Activated CD4-positive, alpha-beta T cell treated with anti-CD3 and anti-CD28 coated beads for 36 hours (primary cell): ENCODE measurements at regions of chr6 and their contacts with region 1.

Region 1: GRCh38 chr6:90274451-90275030 is 22.1 kb downstream of the BACH2 start:
- DNase-seq: peak; percentile 96
- ATAC-seq: peak; percentile 89
- H3K4me3 Mint-ChIP-seq: peak overlapping the region; percentile 54
- H3K27ac Mint-ChIP-seq: peak overlapping the region; percentile 90
- H3K4me1 Mint-ChIP-seq: peaks cover 95% of the 10 kb centered on the region
- H3K27me3 Mint-ChIP-seq: no peaks in the 10 kb centered on the region

Region 2: DNA sequence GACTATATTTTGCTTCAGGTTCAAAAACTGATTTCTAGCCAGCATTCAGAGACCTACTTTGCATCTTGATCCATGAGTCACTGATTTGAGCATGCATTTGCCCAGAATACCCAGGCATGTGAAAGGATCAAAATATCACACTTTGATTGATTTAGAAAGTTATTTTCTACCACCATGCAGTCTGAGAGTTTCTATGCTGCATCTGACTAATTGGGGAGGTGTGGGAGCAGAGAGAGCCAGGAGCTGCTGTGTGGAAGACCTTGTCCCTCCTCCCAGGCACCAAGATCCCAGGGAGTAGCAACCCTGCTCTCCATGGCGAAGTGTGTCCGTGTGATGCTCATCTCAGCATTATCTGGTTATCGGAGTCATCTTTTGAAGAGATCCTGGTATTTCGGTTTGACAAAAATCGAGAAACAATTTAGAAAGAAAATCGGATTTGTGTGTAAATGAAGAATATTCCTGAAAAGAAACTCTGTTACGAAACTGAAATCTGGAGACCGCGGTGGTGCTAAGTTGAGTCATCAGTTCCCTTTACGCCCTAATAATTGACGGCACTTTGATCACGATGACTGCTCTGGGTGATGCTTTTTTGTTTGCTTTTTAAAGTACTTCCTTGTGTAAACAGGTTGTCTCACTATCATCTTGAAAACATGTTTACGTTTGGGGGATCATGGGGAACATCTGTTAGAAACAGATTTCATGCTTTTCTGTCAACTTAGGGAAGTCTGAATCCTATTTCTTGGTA is 171.3 kb before region 1 on chr6:
- CTCF ChIA-PET with region 1: no interaction called
- POLR2A ChIA-PET with region 1: no interaction called
- intact Hi-C with region 1: loop called in 1 of 2 experiments (anchors 1 kb)
- DNase-seq: peak; percentile 58
- ATAC-seq: peak; percentile 80
- H3K4me3 Mint-ChIP-seq: peak overlapping the region; percentile 43
- H3K27ac Mint-ChIP-seq: peak overlapping the region; percentile 79
- H3K4me1 Mint-ChIP-seq: peaks cover 93% of the 10 kb centered on the region
- H3K27me3 Mint-ChIP-seq: no peaks in the 10 kb centered on the region

Region 3: GRCh38 chr6:90251295-90251992 is 23.1 kb before region 1 on chr6:
- CTCF ChIA-PET with region 1: interaction called, 11 read pairs
- POLR2A ChIA-PET with region 1: interaction called, 11 read pairs
- intact Hi-C with region 1: loop called (anchors 1 kb)
- DNase-seq: no peak
- ATAC-seq: peak; percentile 72
- H3K4me3 Mint-ChIP-seq: peak overlapping the region; percentile 26
- H3K27ac Mint-ChIP-seq: peak overlapping the region; percentile 97
- H3K4me1 Mint-ChIP-seq: peaks cover 89% of the 10 kb centered on the region
- H3K27me3 Mint-ChIP-seq: no peaks in the 10 kb centered on the region

Region 4: DNA sequence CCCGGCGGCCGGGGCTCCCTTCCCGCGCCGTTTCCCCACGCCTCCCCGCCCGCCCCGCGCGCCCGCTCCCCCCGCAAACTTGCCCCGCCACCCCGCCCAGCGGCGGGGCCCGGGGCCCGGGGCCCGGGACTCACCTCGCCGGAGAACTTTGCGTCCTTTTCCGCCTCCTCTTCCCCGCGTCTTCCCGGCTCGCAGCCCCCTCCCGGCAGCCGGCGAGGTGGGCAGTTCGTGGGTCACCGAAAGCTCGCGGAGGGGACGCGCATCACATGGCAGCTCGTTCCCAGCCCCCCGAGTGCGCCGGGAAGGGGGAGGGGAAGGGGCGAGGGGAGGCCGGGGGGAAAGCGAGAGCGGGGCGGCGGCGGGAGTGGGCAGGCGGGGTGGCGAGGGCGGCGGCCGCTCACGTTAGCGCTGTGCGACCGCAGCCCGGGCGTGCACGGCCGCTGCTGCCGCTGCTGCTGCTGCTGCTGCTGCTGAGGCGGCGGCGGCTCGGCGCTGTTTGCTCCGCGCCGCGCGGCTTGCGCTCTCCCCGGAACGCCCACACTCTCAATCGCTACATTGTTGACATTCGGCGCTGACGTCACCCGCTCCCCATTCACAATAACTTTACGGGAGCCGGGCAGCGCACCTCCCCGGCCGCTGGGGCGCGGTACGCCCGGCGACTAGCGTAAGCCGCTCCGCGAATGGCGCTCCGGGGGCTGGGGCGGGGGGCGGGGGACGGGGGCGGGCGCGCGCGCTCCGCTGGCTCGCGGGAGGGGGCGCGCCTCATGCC is 22.0 kb after region 1 on chr6 and contains the start of gene BACH2:
- CTCF ChIA-PET with region 1: interaction called, 3 read pairs
- POLR2A ChIA-PET with region 1: interaction called, 6 read pairs
- intact Hi-C with region 1: loop called (anchors 1 kb)
- DNase-seq: peak; percentile 99
- ATAC-seq: peak; percentile 66
- H3K4me3 Mint-ChIP-seq: peak within 1 kb of the TSS; percentile 86
- H3K27ac Mint-ChIP-seq: peak within 1 kb of the TSS; percentile 100
- H3K4me1 Mint-ChIP-seq: peaks cover 49% of the 10 kb centered on the region
- H3K27me3 Mint-ChIP-seq: peaks cover 7% of the 10 kb centered on the region
- total RNA-seq, gene BACH2: 74.7 to 87.3 TPM

Region 5: DNA sequence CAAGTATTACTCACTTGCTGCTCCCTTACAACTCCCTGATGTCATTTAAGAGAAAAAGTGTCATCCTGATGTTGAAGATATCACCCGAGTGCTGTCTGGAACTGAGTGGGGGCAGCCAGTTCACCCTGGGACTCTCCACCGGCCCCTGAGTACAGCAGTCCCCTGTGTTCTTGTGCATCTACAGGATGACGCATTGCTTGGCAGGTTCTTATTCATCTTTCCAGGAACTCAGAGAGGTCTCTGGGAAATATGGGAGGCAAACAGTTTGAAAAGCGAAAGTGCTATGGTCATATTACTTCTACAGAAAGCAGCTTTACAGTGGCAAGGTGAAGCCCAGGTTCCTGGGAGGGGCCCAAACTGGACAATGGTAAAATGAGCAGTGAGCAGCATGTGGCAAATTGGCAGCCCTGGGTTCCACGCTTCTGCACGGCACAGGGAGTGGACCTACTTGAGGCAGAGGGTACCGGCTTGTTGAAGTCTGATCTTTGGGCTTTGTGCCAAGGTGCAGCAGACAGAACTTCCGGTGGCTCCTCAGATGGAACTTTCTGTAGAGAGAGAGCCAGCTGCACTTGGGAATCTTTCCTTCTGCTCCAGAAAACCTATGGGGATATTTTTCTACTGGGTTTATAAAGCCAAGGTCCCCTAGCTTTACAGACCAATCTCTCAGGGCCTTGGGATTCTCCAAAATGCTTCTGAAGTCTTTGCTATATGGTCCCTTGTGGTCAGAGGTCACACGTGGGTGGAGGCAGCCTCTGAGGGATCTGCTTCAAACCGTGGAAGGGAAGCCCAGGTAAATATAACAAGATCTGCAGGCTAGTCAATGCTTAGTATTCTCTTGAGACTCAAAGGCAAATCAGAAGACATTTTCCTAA is 184.0 kb after region 1 on chr6:
- CTCF ChIA-PET with region 1: interaction called, 3 read pairs
- POLR2A ChIA-PET with region 1: interaction called, 7 read pairs
- intact Hi-C with region 1: loop called in 1 of 2 experiments (anchors 1 kb)
- DNase-seq: peak; percentile 93
- ATAC-seq: peak; percentile 89
- H3K4me3 Mint-ChIP-seq: peak overlapping the region; percentile 63
- H3K27ac Mint-ChIP-seq: peak overlapping the region; percentile 99
- H3K4me1 Mint-ChIP-seq: peaks cover 92% of the 10 kb centered on the region
- H3K27me3 Mint-ChIP-seq: no peaks in the 10 kb centered on the region